Gastrocnemius medialis (tissue), 4 donors: ENCODE measurements at regions of chr4 and their contacts with region 1.

Region 1: GRCh38 chr4:85474818-85475630 is at the start of gene ARHGAP24:
- DNase-seq: peak; percentile 70 to 86
- ATAC-seq: peak; percentile 93 to 94
- H3K4me3 ChIP-seq: peak within 1 kb of the TSS; percentile 60 to 66 (median 62)
- H3K27ac ChIP-seq: peak within 1 kb of the TSS; percentile 65 to 72 (median 72)
- H3K4me1 ChIP-seq: peaks cover 0 to 5% of the 10 kb centered on the region in 2 donors
- H3K27me3 ChIP-seq: peaks cover 0 to 2% (median 0%) of the 10 kb centered on the region in 3 donors
- CTCF ChIP-seq: peak in 1 of 5 experiments; percentile 12
- POLR2A ChIP-seq: peak; percentile 25 to 42
- total RNA-seq, gene ARHGAP24: 2.8 to 7.8 (median 5.3) TPM

Region 2: DNA sequence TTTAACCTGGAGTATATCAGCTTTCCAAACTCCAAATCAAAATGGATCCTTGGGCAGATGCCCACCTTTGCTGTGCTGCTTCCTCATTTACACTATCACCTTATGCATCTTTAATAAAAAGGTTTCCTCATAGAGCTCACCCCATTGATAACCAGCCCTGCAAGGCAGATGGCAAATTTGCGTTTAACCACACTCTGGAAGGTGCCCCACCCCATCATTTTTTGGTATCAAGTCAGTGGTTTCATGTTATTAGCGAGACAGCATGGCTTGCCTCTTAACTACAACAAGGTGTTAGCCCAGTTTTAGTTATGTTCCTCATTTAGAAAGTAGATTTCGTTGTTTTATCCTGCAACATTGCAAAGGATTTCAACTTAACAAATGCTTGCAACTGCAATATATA is 294.5 kb before region 1 on chr4:
- in situ Hi-C with region 1: no loop called
- intact Hi-C with region 1: no loop called
- DNase-seq: no peak
- ATAC-seq: no peak
- H3K4me3 ChIP-seq: no peak overlapping the region
- H3K27ac ChIP-seq: no peak overlapping the region
- H3K4me1 ChIP-seq: no peaks in the 10 kb centered on the region
- H3K27me3 ChIP-seq: no peaks in the 10 kb centered on the region
- CTCF ChIP-seq: no peak
- POLR2A ChIP-seq: no peak

Region 3: GRCh38 chr4:85430697-85431096 is 44.3 kb before region 1 on chr4:
- in situ Hi-C with region 1: no loop called
- intact Hi-C with region 1: no loop called
- DNase-seq: no peak
- ATAC-seq: no peak
- H3K4me3 ChIP-seq: no peak overlapping the region
- H3K27ac ChIP-seq: no peak overlapping the region
- H3K4me1 ChIP-seq: peaks cover 5 to 8% of the 10 kb centered on the region in 2 donors
- H3K27me3 ChIP-seq: no peaks in the 10 kb centered on the region
- CTCF ChIP-seq: no peak
- POLR2A ChIP-seq: no peak

Region 4: GRCh38 chr4:85747882-85748491 is 273.0 kb after region 1 on chr4:
- in situ Hi-C with region 1: no loop called
- intact Hi-C with region 1: loop called (anchors 10 kb)
- DNase-seq: no peak
- ATAC-seq: peak; percentile 60 to 79
- H3K4me3 ChIP-seq: no peak overlapping the region
- H3K27ac ChIP-seq: no peak overlapping the region
- H3K4me1 ChIP-seq: peaks cover 0 to 3% of the 10 kb centered on the region in 2 donors
- H3K27me3 ChIP-seq: no peaks in the 10 kb centered on the region
- CTCF ChIP-seq: peak; percentile 53 to 81 (median 69)
- POLR2A ChIP-seq: no peak